ENCODE measurements at regions of chr22 and their contacts with region 1.

Region 1: DNA sequence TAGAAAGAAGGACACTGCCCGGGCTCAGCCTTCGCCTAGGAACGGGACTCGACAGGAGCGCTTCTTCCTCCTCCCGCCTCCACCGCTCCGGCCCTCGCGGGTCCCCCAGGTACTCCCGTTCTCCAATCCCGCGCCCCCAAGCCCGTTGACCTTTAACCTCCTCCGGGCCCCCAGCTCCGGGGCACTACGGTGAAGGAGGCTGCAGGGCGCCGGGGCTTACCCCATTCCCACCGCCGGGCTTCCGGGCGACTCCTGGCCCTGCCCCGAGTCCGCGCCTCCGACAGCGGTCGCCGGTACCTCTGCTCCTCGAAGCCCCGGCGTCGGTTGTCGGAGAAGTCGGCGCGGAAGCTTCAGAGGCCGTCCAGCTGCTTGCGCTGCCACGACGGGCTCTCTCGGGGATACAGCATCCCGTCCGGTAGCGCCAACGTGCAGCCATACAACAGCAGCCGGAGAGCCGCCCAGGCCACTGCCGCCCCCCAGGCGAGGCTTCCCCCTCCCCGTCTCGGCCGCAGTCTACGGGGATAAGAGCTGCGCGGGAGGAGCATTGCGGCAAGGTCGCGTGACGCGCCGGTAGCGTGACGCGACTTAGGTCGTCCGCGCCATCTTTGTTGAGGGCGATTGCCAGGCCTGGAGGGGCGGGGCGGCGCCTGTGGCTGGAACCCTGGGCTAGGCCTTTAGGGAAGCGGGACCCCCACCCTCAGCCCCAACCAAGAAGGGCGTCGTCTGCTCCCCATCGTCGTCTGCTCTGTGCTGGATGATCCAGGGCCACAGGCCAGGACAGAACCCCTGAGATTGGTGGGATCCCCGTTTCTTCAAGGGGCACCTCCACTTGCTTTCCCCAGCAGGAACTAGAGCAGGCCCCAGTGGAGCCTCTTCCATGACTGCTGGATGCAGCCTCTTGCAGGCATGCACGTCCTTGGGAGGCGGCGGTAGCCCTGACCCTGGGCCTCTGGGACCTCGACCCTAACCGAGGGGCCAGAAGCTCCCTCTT is 26.3 kb downstream of the RGL4 start:
- DNase-seq: peak; percentile 83
- H3K4me3 ChIP-seq: peak overlapping the region; percentile 68 to 88 (median 74)
- H3K27ac ChIP-seq: peak overlapping the region; percentile 55
- H3K4me1 ChIP-seq: no peaks in the 10 kb centered on the region
- H3K27me3 ChIP-seq: no peaks in the 10 kb centered on the region
- CTCF ChIP-seq: no peak
- POLR2A ChIP-seq: peak; percentile 90

Region 2: DNA sequence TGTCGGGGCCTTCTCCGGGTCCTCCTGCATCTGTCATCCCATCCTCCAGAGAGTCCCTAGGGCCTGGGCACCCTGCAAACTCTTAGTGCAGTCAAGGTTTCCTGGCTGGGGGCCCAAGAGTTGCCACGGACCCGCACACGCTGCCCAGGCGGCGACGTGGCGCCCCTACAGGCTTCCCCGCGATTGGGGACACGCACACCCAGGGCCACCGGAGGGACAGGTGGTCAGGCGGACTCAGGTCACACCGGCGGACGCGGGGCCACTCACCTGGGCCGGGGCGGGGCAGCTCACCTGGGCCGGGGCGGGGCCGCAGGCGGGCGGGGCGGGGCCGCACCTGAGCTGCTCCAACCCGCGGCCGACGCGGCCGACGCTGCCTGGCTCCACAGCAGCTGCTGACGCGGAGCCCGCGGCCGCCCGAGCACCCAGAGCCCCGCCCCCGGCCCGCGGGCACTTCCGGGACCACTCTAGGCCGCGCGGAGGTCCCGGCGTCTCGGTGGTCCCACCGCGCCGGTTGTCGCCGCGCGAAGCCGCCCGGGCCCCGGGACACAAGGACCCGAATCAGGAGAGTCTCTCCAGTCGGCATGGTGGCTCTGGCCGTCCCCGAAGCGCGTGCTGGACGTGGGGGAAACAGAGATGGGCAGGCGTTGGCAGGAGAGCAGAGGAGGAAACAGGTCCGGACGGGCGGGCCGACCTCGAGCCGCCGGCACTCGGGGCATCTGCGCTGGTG is 33.8 kb after region 1 on chr22 and contains the start of gene ZNF70:
- CTCF ChIA-PET with region 1: no interaction called
- POLR2A ChIA-PET with region 1: no interaction called
- dilution Hi-C with region 1: no loop called
- intact Hi-C with region 1: loop called (anchors 1 kb)
- DNase-seq: peak; percentile 60
- H3K4me3 ChIP-seq: peak within 1 kb of the TSS; percentile 88 to 92 (median 89)
- H3K27ac ChIP-seq: no peak within 1 kb of the TSS
- H3K4me1 ChIP-seq: peaks cover 10% of the 10 kb centered on the region
- H3K27me3 ChIP-seq: no peaks in the 10 kb centered on the region
- CTCF ChIP-seq: peak in 1 of 2 donors; percentile 40
- POLR2A ChIP-seq: no peak
- total RNA-seq, gene ZNF70: 6.0 and 6.2 TPM in 2 replicates